ENCODE measurements at regions of chr12 and their contacts with region 1.

Region 1: DNA sequence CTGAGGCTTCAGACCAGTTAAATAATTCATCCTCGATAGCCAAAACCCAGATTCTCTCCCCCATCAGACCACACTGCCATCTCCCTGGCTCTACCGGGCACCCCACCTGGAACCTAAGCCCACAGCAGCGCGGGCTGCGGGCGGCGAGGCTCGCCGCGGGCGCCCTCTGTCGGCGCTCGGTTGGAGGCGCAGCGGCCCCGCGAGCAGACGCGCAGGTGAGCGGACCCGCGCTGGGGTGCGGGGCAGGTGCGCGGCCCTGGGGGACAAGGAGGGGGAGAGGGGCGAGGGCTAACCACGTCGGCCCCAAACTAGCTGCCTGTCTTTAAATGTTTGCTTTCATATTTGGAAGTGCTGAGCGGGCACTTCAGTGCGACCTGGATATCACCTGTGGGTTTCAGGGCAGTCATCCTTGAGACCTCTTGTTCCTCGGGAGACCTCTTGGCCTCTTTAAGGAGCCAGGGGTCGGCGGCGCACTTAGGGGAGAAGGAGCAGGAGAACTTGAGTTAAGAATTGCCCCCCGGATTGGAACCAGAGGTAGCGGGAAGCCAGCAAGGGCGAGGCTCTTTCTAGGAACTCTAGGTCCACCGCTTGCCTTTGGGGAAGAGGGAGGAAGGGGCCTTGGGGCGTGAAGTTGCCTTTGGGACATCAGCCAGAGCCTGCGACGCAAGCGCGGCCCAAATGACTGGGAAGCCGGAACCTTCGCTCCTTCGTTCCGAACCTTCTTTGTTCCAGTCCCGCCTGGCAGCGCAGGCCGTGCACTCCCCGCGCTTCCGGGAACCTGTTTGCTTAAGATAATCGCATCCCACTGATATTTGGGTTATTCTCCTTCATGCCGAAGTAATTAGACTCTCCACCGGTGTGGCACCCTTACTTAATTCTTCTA is 78.7 kb downstream of the NEDD1 start:
- DNase-seq: peak; percentile 21
- H3K4me3 Mint-ChIP-seq: no peak overlapping the region
- H3K27ac Mint-ChIP-seq: no peak overlapping the region
- H3K4me1 Mint-ChIP-seq: peaks cover 5% of the 10 kb centered on the region
- H3K27me3 Mint-ChIP-seq: peaks cover 22% of the 10 kb centered on the region
- CTCF ChIP-seq: peak; percentile 88

Region 2: DNA sequence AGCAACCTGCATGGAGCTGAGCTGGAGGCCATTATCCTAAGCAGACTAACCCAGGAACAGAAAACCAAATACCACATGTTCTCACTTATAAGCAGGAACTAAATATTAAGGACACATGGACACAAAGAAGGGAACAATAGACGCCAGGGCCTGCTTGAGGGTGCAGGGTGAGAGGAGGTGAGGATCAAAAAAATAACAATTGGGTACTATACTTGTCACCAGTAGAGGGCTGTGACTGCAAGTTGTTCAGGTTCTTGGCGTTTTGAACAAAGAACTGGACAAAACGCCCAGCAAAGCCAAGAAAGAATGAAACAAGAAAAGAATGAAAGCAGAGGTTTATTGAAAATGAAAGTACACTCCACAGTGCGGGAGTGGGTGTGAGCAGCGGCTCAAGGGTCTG is 287.2 kb before region 1 on chr12:
- CTCF ChIA-PET with region 1: interaction called, 3 read pairs
- POLR2A ChIA-PET with region 1: no interaction called
- intact Hi-C with region 1: loop called (anchors 10 kb)
- DNase-seq: peak; percentile 20
- H3K4me3 Mint-ChIP-seq: no peak overlapping the region
- H3K27ac Mint-ChIP-seq: no peak overlapping the region
- H3K4me1 Mint-ChIP-seq: no peaks in the 10 kb centered on the region
- H3K27me3 Mint-ChIP-seq: no peaks in the 10 kb centered on the region
- CTCF ChIP-seq: no peak

Region 3: DNA sequence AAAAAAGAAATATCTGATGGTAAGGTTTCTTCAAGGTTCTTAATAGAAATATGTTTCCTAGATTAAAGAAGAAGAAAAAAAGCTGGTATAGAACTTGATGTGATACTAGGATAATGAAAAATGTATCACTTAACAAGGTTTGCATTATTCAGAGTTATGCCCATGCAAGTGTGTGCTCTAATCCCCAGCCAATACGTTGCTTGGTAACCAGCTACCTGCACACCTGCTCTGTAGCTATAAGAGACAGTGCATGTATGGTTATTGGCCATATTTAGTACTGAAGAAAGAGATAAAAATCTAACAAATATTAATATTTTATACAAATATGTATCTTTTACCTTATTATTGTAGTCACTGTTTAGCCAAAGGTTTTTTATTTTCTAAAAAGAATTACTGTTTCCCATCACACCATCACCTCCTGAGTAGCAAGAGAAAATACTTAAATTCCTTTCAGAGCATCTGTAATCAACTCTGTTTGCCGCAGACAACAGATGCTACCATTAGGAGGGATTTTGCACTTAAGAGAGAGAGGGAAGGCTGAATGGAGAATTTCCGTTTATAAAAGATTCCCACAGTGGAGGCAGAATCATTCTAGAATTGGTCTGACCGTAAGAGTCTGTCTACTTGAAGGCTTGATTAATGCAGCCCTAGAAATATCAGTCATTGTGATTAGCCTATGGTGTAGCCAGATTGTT is 37.0 kb after region 1 on chr12:
- CTCF ChIA-PET with region 1: no interaction called
- POLR2A ChIA-PET with region 1: no interaction called
- intact Hi-C with region 1: no loop called
- DNase-seq: no peak
- H3K4me3 Mint-ChIP-seq: no peak overlapping the region
- H3K27ac Mint-ChIP-seq: no peak overlapping the region
- H3K4me1 Mint-ChIP-seq: no peaks in the 10 kb centered on the region
- H3K27me3 Mint-ChIP-seq: peaks cover 26% of the 10 kb centered on the region
- CTCF ChIP-seq: no peak

Region 4: DNA sequence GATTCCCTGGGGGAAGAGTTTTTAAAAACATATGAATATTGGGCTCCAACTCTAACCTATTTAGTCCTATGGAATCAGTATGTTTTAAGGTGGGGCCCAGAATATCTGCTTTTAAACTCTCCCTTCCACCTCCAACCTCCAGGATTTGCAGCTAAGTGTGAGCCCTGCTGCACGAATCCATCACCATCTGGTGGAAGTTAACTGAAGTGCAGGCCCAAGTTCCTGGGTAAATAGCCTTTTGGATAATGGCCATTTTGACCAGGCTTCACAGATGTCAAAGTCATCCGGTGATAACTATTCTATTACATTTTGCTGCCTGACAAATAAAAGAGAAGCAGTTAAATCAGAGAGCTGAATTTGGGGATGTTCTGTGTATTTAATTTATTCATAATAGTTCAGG is 418.8 kb after region 1 on chr12:
- CTCF ChIA-PET with region 1: interaction called, 30 read pairs
- POLR2A ChIA-PET with region 1: no interaction called
- intact Hi-C with region 1: loop called (anchors 1 kb)
- DNase-seq: peak; percentile 43
- H3K4me3 Mint-ChIP-seq: no peak overlapping the region
- H3K27ac Mint-ChIP-seq: no peak overlapping the region
- H3K4me1 Mint-ChIP-seq: no peaks in the 10 kb centered on the region
- H3K27me3 Mint-ChIP-seq: no peaks in the 10 kb centered on the region
- CTCF ChIP-seq: peak; percentile 73

Region 5: DNA sequence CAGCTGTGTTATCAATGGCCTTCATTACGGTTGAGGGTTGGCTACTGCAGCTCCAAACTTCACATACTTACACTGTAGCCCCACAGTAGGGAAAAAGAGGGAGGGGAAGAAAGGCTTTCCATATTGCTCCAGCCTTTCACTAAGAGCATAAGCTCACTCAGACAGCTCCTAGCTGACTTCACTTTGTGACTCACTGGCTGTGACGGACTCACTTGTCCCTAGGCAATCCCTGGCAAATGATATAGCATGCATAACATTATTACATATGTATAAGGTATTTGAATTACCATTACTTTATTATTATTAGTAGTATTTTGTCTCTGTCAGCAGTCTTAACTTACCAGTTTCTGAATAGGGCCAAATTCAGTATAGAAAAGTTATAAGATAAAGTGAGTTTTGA is 827.6 kb after region 1 on chr12:
- CTCF ChIA-PET with region 1: no interaction called
- POLR2A ChIA-PET with region 1: no interaction called
- intact Hi-C with region 1: no loop called
- DNase-seq: no peak
- H3K4me3 Mint-ChIP-seq: no peak overlapping the region
- H3K27ac Mint-ChIP-seq: no peak overlapping the region
- H3K4me1 Mint-ChIP-seq: no peaks in the 10 kb centered on the region
- H3K27me3 Mint-ChIP-seq: no peaks in the 10 kb centered on the region
- CTCF ChIP-seq: no peak

Region 6: DNA sequence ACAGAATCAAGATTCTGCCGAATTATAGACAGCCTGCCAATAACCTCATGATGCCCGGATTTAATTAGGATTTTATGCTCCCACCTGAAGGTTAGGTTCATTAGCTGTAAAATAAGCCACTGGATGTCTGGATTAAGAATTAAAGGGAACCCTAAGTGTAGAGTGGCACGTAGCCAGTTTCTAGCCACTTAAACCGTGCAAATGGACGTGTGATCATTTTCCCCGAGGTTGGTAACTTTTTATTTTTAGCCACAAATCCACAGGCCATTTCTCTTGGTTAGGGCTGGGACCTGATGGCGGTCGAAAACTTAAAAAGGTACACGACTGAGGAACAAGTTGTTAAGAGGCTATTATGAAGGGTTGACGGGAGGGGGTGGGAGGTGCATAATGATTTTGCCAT is 1402.4 kb after region 1 on chr12:
- CTCF ChIA-PET with region 1: interaction called, 10 read pairs
- POLR2A ChIA-PET with region 1: no interaction called
- intact Hi-C with region 1: no loop called
- DNase-seq: no peak
- H3K4me3 Mint-ChIP-seq: no peak overlapping the region
- H3K27ac Mint-ChIP-seq: no peak overlapping the region
- H3K4me1 Mint-ChIP-seq: no peaks in the 10 kb centered on the region
- H3K27me3 Mint-ChIP-seq: peaks cover 33% of the 10 kb centered on the region
- CTCF ChIP-seq: no peak